H1 (cell line): ENCODE measurements at regions of chr4 and their contacts with region 1.

Region 1: GRCh38 chr4:140595065-140595464 is 26.3 kb upstream of the UCP1 start:
- DNase-seq: peak in 1 of 2 experiments; percentile 50
- H3K4me3 ChIP-seq: no peak overlapping the region
- H3K27ac ChIP-seq: no peak overlapping the region
- H3K4me1 ChIP-seq: peaks cover 0 to 2% (median 2%) of the 10 kb centered on the region in 4 experiments; a peak in 2 of 7 replicates
- H3K27me3 ChIP-seq: no peaks in the 10 kb centered on the region
- CTCF ChIP-seq: peak; percentile 62 to 84 (median 82)
- EP300 ChIP-seq: no peak
- POLR2A ChIP-seq: no peak
- RAD21 ChIP-seq: peak; percentile 88 to 91

Region 2: GRCh38 chr4:140579278-140579677 is 15.8 kb before region 1 on chr4:
- CTCF ChIA-PET with region 1: interaction called, 12 read pairs
- POLR2A ChIA-PET with region 1: no interaction called
- DNase-seq: no peak
- H3K4me3 ChIP-seq: no peak overlapping the region
- H3K27ac ChIP-seq: no peak overlapping the region
- H3K4me1 ChIP-seq: no peaks in the 10 kb centered on the region
- H3K27me3 ChIP-seq: peaks cover 0 to 7% (median 2%) of the 10 kb centered on the region in 4 experiments; a peak in 2 of 7 replicates
- CTCF ChIP-seq: no peak
- EP300 ChIP-seq: no peak
- POLR2A ChIP-seq: no peak
- RAD21 ChIP-seq: no peak

Region 3: DNA sequence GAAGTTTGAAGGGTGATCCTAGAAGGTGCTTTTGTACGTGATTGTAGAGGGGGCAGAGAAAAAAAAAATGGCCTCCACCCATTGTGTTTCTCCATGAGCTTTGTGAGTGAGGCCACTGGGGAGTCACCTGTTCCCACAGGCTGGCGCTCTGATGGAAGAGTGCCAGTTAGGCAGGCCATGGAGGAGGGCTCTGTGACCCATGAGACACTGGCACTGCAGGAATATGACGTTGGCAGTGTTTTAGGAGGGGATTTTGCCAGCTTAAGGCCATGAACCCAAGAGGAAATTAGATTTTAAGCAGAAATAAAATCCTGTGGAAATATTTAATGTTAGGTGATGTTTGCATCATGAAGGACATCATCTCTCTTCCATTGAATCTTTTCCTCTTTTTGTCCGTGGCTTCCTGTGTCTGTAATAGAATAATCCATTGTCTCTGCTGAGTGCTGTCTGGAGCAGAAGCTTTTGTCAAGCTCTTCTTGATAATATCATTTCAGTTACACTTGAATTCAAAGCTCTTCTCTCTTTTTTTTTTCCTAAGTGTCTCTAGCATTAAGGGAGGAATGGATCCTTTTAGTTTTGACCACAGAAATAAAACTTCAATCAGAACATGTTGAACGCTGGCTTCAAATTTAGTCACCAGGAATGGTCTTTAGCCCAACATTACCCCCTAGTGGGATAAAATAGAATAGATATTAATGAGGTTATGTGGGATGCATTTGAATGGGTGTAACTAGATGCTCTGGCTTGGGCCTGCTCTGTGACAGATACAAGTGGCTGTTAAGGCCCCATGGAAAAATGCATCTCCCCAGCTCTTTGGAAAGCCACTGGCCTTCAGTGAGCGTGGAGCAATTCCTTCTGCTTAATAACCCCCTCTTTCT is 14.7 kb after region 1 on chr4:
- CTCF ChIA-PET with region 1: interaction called, 25 read pairs
- POLR2A ChIA-PET with region 1: no interaction called
- DNase-seq: no peak
- H3K4me3 ChIP-seq: no peak overlapping the region
- H3K27ac ChIP-seq: no peak overlapping the region
- H3K4me1 ChIP-seq: no peaks in the 10 kb centered on the region
- H3K27me3 ChIP-seq: no peaks in the 10 kb centered on the region
- CTCF ChIP-seq: peak in 1 of 3 experiments; percentile 18; a peak in 1 of 4 replicates
- EP300 ChIP-seq: no peak
- POLR2A ChIP-seq: no peak
- RAD21 ChIP-seq: peak; percentile 47 to 48

Region 4: GRCh38 chr4:140617499-140618248 is 22.6 kb after region 1 on chr4:
- CTCF ChIA-PET with region 1: interaction called, 10 read pairs
- POLR2A ChIA-PET with region 1: no interaction called
- DNase-seq: no peak
- H3K4me3 ChIP-seq: no peak overlapping the region
- H3K27ac ChIP-seq: no peak overlapping the region
- H3K4me1 ChIP-seq: peaks cover 0 to 9% (median 4%) of the 10 kb centered on the region in 4 experiments; a peak in 4 of 7 replicates
- H3K27me3 ChIP-seq: no peaks in the 10 kb centered on the region
- CTCF ChIP-seq: no peak
- EP300 ChIP-seq: no peak
- POLR2A ChIP-seq: no peak
- RAD21 ChIP-seq: no peak

Region 5: GRCh38 chr4:140637836-140638235 is 42.8 kb after region 1 on chr4:
- CTCF ChIA-PET with region 1: interaction called, 16 read pairs
- POLR2A ChIA-PET with region 1: no interaction called
- DNase-seq: no peak
- H3K4me3 ChIP-seq: no peak overlapping the region
- H3K27ac ChIP-seq: no peak overlapping the region
- H3K4me1 ChIP-seq: peaks cover 0 to 4% (median 3%) of the 10 kb centered on the region in 4 experiments; a peak in 5 of 7 replicates
- H3K27me3 ChIP-seq: no peaks in the 10 kb centered on the region
- CTCF ChIP-seq: peak; percentile 69 to 88 (median 75)
- EP300 ChIP-seq: no peak
- POLR2A ChIP-seq: no peak
- RAD21 ChIP-seq: peak; percentile 86 to 92

Region 6: DNA sequence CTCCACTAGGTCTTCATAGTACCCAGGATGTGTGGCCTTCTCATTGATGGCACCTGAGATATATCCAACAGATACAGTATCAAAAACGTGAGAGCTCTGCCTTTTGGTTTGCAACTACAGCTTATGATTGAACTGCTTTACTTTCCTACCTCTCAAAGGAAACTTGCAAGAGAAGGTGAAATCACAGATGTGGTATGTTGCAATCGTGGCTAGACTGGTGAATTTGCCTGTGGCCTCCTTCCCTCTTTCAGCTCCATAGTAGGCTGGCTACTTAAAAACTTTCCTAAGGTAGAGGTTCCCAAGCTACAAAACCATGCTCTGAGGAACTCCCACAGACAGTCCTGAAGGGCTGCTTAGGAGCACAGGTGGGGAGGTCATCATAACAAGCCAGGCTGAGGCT is 67.0 kb after region 1 on chr4:
- CTCF ChIA-PET with region 1: no interaction called
- POLR2A ChIA-PET with region 1: no interaction called
- DNase-seq: no peak
- H3K4me3 ChIP-seq: no peak overlapping the region
- H3K27ac ChIP-seq: no peak overlapping the region
- H3K4me1 ChIP-seq: no peaks in the 10 kb centered on the region
- H3K27me3 ChIP-seq: no peaks in the 10 kb centered on the region
- CTCF ChIP-seq: no peak
- EP300 ChIP-seq: no peak
- POLR2A ChIP-seq: no peak
- RAD21 ChIP-seq: no peak

Region 7: DNA sequence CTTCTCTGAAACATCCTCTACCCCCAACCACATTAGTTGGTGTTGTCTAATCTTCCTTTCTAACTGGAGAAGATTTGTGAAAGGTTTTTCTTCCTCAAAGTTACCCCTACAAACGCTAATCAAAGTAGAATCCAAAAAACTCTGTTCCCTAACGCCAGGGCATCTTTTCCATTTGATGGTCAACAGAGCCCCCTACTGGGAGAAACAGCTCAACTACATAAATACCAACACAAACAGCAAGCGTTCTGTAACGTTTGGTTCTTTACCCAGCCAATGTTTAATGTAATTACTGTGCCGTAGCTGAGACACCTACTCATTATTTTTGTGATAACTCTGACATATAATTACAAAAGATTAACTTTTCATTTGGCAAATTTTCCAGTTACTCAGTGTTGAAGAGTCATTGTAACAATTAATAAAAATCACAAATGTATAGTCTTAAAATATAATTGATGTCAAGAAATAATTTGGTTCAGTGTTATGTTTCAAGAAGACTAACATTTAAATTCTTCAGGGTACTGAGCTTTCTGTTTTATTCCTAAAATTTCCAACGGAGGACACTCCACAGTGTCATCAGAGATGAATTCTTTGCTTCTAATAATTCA is 256.1 kb after region 1 on chr4:
- CTCF ChIA-PET with region 1: interaction called, 17 read pairs
- POLR2A ChIA-PET with region 1: interaction called, 3 read pairs
- DNase-seq: peak in 1 of 2 experiments; percentile 56
- H3K4me3 ChIP-seq: no peak overlapping the region
- H3K27ac ChIP-seq: no peak overlapping the region
- H3K4me1 ChIP-seq: no peaks in the 10 kb centered on the region
- H3K27me3 ChIP-seq: no peaks in the 10 kb centered on the region
- CTCF ChIP-seq: peak in 2 of 3 experiments; percentile 76 to 88; a peak in 3 of 4 replicates
- EP300 ChIP-seq: no peak
- POLR2A ChIP-seq: no peak
- RAD21 ChIP-seq: peak; percentile 98